ENCODE measurements at regions of chr6 and their contacts with region 1.

Region 1: GRCh38 chr6:122730775-122731386 is 48.6 kb upstream of the FABP7 start:
- H3K4me3 ChIP-seq: no peak overlapping the region
- H3K27ac ChIP-seq: no peak overlapping the region
- H3K4me1 ChIP-seq: no peaks in the 10 kb centered on the region
- CTCF ChIP-seq: peak; percentile 44; the same call in 1 of the 2 replicates

Region 2: DNA sequence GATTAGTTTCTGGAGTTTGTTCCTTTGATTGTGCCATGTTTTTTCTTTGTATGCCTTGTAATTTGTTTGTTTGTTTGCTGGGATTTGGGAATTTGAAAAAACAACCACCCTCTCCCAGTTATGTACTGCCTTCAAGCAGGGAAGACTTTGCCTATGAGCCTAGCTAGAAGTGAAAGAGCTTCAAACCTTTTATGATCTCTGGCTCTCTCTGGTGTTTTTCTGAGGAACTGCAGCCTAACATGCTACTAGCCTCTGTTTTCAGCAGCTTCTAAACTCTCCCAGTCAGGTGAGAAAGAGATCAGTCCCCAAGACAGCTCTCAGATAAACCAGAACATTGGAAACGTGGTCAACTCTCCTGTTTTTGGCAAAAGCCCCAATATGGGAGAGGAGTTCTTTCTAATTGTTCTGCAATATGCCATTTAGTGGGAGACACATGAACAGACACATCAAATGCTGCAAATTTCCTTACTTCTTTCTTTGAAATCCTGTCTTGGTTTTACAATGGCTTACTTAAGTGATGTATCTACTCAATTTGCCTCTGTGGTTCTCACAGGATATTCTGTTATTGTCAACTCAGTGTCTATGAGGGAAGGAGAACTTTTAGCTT is 200.3 kb before region 1 on chr6:
- CTCF ChIA-PET with region 1: interaction called, 19 read pairs
- POLR2A ChIA-PET with region 1: no interaction called
- H3K4me3 ChIP-seq: no peak overlapping the region
- H3K27ac ChIP-seq: no peak overlapping the region
- H3K4me1 ChIP-seq: no peaks in the 10 kb centered on the region
- CTCF ChIP-seq: peak; percentile 35; the same call in 1 of the 2 replicates

Region 3: DNA sequence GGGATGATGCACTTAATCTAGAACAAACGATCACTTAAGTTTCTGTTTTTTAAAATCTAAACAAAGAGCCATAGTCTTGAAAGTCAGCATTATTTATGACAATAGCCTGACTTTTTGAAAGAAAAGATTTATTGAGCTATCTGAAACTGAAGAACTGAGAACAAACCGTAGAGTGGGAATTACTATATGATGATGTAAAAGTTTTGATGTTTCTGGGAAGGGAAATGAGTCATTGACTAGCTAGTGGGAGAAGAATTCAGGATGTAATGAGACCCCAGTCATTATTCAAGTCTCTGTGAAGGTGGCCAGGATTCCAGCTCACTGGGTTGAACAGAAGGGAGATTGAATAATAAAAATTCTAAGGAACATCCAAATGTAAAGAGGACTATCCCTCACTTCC is 34.8 kb before region 1 on chr6:
- CTCF ChIA-PET with region 1: interaction called, 15 read pairs
- POLR2A ChIA-PET with region 1: no interaction called
- H3K4me3 ChIP-seq: no peak overlapping the region
- H3K27ac ChIP-seq: no peak overlapping the region
- H3K4me1 ChIP-seq: no peaks in the 10 kb centered on the region
- CTCF ChIP-seq: no peak

Region 4: GRCh38 chr6:122789182-122790027 is 58.5 kb after region 1 on chr6 and contains the start of gene SMPDL3A:
- CTCF ChIA-PET with region 1: interaction called, 21 read pairs
- POLR2A ChIA-PET with region 1: interaction called, 5 read pairs
- H3K4me3 ChIP-seq: peak within 1 kb of the TSS; percentile 66
- H3K27ac ChIP-seq: peak within 1 kb of the TSS; percentile 78
- H3K4me1 ChIP-seq: peaks cover 12% of the 10 kb centered on the region
- CTCF ChIP-seq: peak; percentile 94

Region 5: DNA sequence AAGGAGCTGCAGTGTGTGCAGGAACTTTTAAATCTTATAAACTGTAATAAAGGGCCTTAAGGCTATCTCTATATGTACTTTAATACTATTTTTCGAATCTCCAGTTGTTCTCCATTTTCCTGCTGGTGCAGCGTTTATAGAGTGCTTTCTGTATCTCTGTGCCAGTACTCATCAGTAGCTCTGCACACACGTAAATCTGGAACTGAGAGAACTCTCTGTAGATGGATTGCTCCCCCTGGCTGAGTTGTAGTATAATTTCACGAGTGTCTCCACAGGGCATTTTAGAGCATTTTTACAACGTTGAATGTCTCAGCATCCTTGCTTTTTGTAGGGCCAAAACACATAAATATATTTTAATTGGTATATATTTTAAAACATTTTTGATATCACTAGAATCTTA is 649.4 kb after region 1 on chr6:
- CTCF ChIA-PET with region 1: interaction called, 10 read pairs
- POLR2A ChIA-PET with region 1: no interaction called
- H3K4me3 ChIP-seq: no peak overlapping the region
- H3K27ac ChIP-seq: no peak overlapping the region
- H3K4me1 ChIP-seq: no peaks in the 10 kb centered on the region
- CTCF ChIP-seq: peak; percentile 50; the same call in 1 of the 2 replicates